ENCODE measurements at regions of chr2 and their contacts with region 1.

Region 1: DNA sequence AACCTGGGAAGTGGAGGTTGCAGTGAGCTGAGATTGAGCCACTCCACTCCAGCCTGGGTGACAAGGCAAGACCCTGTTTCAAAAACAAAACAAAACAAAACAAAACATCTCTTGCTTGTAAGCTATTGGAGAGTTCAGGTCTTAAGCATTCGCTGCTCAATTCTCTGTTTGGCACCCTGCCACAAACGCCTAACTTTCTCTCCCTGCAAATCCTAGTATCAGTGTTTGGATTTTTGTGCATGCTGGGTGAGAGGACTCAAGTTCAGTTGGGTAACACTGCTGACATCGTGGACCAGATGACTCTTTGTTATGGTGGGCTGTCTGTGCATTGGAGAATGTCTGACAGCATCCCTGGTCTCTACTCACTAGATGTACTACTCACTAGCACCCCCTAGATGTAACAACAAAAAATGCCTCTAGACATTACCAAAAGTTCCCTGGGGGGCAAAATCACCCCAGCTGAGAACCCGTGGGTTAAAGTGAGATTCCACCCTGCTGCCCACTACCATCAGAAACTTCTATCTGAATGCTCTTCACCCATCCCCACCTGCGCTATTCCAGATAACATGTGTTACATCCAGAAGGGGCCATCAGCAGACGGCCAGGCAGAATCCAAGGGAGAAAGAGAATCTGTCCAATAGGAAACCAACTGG is 50.9 kb downstream of the CACNB4 start:
- DNase-seq: no peak
- CTCF ChIP-seq: peak; percentile 38

Region 2: DNA sequence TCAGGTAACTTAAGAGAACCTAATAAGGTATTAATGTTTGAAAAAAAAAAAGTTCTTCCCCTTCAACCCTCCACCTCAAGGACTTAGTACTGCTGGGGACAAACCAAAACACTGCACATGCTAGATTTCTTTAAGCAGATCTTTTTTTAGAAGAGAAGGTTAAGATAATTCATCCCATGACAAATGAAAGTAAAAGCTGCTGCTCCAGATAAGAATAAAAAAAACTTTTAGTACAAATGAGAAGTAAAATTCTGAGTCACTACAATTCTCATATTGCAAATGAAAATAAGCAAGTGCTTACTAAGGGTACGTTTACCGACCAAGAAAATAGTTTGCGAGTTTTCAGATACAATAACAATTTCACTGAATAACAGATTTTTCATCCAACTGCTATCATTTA is 118.7 kb after region 1 on chr2:
- in situ Hi-C with region 1: loop called (anchors 10 kb)
- DNase-seq: peak; percentile 68
- CTCF ChIP-seq: no peak

Measured in GM13976 (cell line).